ENCODE measurements at regions of chr14 and their contacts with region 1.

Region 1: GRCh38 chr14:74018586-74019407 is at the starts of genes BBOF1 and ENTPD5:
- DNase-seq: peak; percentile 69 to 95 (median 86)
- ATAC-seq: peak; percentile 93
- H3K4me3 ChIP-seq: peak within 1 kb of the TSS; percentile 82 to 93
- H3K4me3 Mint-ChIP-seq: peak within 1 kb of the TSS; percentile 91
- H3K27ac ChIP-seq: peak within 1 kb of the TSS; percentile 86 to 94
- H3K27ac Mint-ChIP-seq: peak within 1 kb of the TSS; percentile 97
- H3K4me1 ChIP-seq: peaks cover 12% of the 10 kb centered on the region
- H3K4me1 Mint-ChIP-seq: peaks cover 16% of the 10 kb centered on the region
- H3K27me3 ChIP-seq: no peaks in the 10 kb centered on the region
- H3K27me3 Mint-ChIP-seq: no peaks in the 10 kb centered on the region
- CTCF ChIP-seq: no peak
- total RNA-seq, gene BBOF1: 2.4 to 2.9 TPM
- total RNA-seq, gene ENTPD5: 8.0 to 9.0 TPM

Region 2: DNA sequence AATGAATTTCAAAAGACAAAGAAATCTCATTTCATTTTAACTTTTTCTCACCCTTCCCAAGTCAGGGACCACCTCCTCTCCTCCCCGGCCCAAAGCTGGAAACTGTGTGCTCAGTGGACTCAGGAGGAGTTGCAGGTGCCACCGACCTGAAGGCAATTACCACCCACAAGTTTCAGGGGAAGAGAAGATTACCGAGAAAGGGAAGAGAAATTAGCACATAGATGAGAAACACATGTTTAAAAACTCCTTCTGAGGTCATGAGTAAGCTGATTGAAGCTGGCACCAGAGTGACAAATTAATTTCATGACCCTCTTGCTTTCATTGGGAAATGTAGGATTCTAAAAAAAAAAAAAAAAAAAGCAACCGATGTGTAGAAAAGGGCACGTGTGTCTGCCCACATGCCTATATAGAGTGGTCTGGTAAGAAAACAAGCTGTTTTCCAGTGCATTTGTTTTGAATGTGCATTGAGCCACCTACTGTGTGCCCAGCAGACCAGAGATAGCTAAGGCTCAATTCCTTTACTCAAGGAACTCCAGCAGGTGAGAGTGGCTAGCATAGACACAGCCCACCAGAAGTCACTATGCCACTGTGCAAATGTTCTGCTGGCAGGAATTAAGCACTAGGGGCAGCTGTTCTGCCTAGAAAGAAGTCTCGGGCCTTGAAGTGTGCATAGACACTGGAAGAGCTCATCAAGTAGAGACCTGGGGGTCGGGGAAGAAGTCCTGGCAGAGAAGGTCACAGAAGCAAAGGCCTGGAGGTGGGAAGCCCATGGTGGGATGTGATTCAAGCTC is 1155.4 kb before region 1 on chr14:
- CTCF ChIA-PET with region 1: no interaction called
- POLR2A ChIA-PET with region 1: no interaction called
- intact Hi-C with region 1: no loop called
- DNase-seq: no peak
- ATAC-seq: no peak
- H3K4me3 ChIP-seq: no peak overlapping the region
- H3K4me3 Mint-ChIP-seq: no peak overlapping the region
- H3K27ac ChIP-seq: no peak overlapping the region
- H3K27ac Mint-ChIP-seq: no peak overlapping the region
- H3K4me1 ChIP-seq: no peaks in the 10 kb centered on the region
- H3K4me1 Mint-ChIP-seq: no peaks in the 10 kb centered on the region
- H3K27me3 ChIP-seq: no peaks in the 10 kb centered on the region
- H3K27me3 Mint-ChIP-seq: peaks cover 2% of the 10 kb centered on the region
- CTCF ChIP-seq: no peak

Region 3: DNA sequence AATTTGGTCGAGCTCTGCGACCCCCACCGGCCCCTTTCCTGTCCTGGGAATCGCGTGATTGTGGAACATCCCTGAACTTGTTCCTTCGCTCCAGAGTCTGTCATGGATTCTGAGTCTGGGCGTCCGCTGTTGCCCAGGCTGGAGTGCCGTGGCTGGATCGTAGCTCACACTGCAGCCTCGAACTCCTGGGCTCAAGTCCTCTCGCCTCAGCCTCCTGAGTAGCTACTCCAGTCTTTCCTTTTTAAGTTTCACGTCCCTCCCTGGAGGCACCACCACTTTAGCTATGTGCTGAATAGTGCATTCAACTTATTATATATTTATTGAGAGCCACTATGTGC is 405.8 kb before region 1 on chr14:
- CTCF ChIA-PET with region 1: no interaction called
- POLR2A ChIA-PET with region 1: no interaction called
- intact Hi-C with region 1: loop called in 1 of 2 experiments (anchors 5 kb)
- DNase-seq: no peak
- ATAC-seq: no peak
- H3K4me3 ChIP-seq: peak overlapping the region; percentile 58 to 94
- H3K4me3 Mint-ChIP-seq: peak overlapping the region; percentile 86
- H3K27ac ChIP-seq: peak overlapping the region; percentile 37 to 77
- H3K27ac Mint-ChIP-seq: peak overlapping the region; percentile 82
- H3K4me1 ChIP-seq: peaks cover 3% of the 10 kb centered on the region
- H3K4me1 Mint-ChIP-seq: peaks cover 5% of the 10 kb centered on the region
- H3K27me3 ChIP-seq: no peaks in the 10 kb centered on the region
- H3K27me3 Mint-ChIP-seq: peaks cover 3% of the 10 kb centered on the region
- CTCF ChIP-seq: no peak

Region 4: GRCh38 chr14:73749721-73750513 is 268.9 kb before region 1 on chr14:
- CTCF ChIA-PET with region 1: no interaction called
- POLR2A ChIA-PET with region 1: no interaction called
- intact Hi-C with region 1: no loop called
- DNase-seq: peak in 2 of 9 experiments; percentile 49 to 62
- ATAC-seq: no peak
- H3K4me3 ChIP-seq: no peak overlapping the region
- H3K4me3 Mint-ChIP-seq: peak overlapping the region; percentile 8
- H3K27ac ChIP-seq: peak overlapping the region in 1 of 2 experiments; percentile 85
- H3K27ac Mint-ChIP-seq: peak overlapping the region; percentile 97
- H3K4me1 ChIP-seq: peaks cover 98% of the 10 kb centered on the region
- H3K4me1 Mint-ChIP-seq: peaks cover 96% of the 10 kb centered on the region
- H3K27me3 ChIP-seq: no peaks in the 10 kb centered on the region
- H3K27me3 Mint-ChIP-seq: no peaks in the 10 kb centered on the region
- CTCF ChIP-seq: no peak

Region 5: GRCh38 chr14:73886449-73887317 is 132.1 kb before region 1 on chr14 and contains the start of gene ZNF410:
- CTCF ChIA-PET with region 1: no interaction called
- POLR2A ChIA-PET with region 1: no interaction called
- intact Hi-C with region 1: loop called (anchors 2 to 5 kb)
- DNase-seq: peak; percentile 70 to 95 (median 85)
- ATAC-seq: peak; percentile 98
- H3K4me3 ChIP-seq: peak within 1 kb of the TSS; percentile 90
- H3K4me3 Mint-ChIP-seq: peak within 1 kb of the TSS; percentile 98
- H3K27ac ChIP-seq: peak within 1 kb of the TSS; percentile 91 to 99
- H3K27ac Mint-ChIP-seq: peak within 1 kb of the TSS; percentile 99
- H3K4me1 ChIP-seq: peaks cover 19% of the 10 kb centered on the region
- H3K4me1 Mint-ChIP-seq: peaks cover 46% of the 10 kb centered on the region
- H3K27me3 ChIP-seq: no peaks in the 10 kb centered on the region
- H3K27me3 Mint-ChIP-seq: no peaks in the 10 kb centered on the region
- CTCF ChIP-seq: no peak
- total RNA-seq, gene ZNF410: 86.6 to 89.2 TPM

Region 6: GRCh38 chr14:74257078-74257989 is 238.5 kb after region 1 on chr14:
- CTCF ChIA-PET with region 1: no interaction called
- POLR2A ChIA-PET with region 1: no interaction called
- intact Hi-C with region 1: loop called in 1 of 2 experiments (anchors 10 kb)
- DNase-seq: peak; percentile 36 to 79 (median 61)
- ATAC-seq: peak; percentile 97
- H3K4me3 ChIP-seq: peak overlapping the region; percentile 56 to 63
- H3K4me3 Mint-ChIP-seq: peak overlapping the region; percentile 83
- H3K27ac ChIP-seq: no peak overlapping the region
- H3K27ac Mint-ChIP-seq: no peak overlapping the region
- H3K4me1 ChIP-seq: peaks cover 6% of the 10 kb centered on the region
- H3K4me1 Mint-ChIP-seq: peaks cover 6% of the 10 kb centered on the region
- H3K27me3 ChIP-seq: peaks cover 0 to 3% of the 10 kb centered on the region in 2 experiments
- H3K27me3 Mint-ChIP-seq: peaks cover 11% of the 10 kb centered on the region
- CTCF ChIP-seq: peak; percentile 98

Measured in CD8-positive, alpha-beta T cell (primary cell).